ENCODE measurements at regions of chr9 and their contacts with region 1.

Region 1: DNA sequence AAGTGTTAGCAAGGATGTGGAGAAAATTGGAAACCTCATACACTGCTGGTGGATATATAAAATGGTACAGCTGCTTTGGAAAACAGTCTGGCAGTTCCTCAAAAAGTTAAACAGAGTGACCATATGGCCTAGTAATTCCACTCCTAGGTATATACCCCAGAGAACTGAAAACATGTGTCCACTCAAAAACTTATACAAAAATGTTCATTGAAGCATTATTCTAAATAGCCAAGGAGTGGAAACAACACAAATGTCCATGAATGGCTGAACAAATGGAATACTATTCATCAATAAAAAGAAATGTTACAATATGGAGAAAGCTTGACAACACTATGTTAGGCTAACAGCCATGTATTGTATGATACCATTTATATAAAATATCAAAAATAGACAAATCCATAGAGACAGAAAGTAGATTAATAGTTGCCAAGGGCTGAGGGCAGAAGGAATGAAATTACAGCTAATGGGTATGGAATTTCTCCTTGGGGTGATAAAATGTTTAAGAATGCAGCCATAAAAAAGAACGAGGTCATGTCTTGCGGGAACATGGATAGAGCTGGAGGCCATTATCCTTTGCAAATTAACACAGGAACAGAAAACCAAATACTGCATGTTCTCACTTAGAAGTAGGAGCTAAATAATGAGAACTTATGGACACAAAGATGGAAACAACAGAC is 33.6 kb upstream of the FBP1 start:
- DNase-seq: no peak
- H3K4me3 ChIP-seq: no peak overlapping the region
- H3K27ac ChIP-seq: peak overlapping the region; percentile 29 to 73; a peak in 3 of 4 replicates
- H3K4me1 ChIP-seq: 0 out of 4 replicates have a peak, but pooled peaks cover 0 to 12% of the 10 kb centered on the region in 2 experiments
- H3K27me3 ChIP-seq: no peaks in the 10 kb centered on the region
- CTCF ChIP-seq: no peak
- EP300 ChIP-seq: peak in 1 of 2 experiments; percentile 47; a peak in 1 of 4 replicates
- RAD21 ChIP-seq: no peak

Region 2: DNA sequence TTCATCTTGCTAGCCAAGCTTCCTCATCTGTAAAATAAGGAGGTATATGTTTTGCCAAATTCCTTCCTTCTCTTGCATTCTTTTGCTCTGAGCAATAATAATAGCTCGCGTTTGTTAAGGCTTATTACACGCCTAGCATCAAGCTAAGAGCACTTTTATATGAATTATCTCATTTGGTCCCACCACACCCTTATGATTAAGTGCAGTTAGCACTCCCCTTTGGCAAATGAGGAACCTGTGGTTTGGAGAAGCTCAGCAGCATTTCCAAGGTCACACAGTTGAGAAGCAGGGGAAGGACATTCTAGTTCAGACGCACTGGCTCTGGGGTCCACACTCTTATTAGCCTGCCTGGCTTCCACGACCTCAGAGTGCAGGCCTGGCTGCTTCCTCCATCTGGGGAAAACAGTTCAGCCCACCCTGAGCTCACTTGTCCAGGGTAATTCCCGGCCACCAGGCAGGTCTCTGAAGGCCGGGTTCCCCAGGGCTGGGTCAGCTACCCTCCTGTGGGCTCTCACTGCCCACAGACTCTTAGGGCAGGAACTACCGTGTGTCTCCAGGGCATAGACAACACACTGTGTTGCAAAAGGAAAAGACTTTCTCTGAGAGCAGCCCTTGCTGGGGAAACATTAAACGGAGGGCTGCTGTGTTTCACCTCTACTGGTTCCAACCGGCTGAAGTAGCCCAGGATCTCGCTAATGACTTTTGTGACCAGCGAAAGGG is 23.7 kb before region 1 on chr9:
- CTCF ChIA-PET with region 1: interaction called, 29 read pairs
- POLR2A ChIA-PET with region 1: no interaction called
- DNase-seq: no peak
- H3K4me3 ChIP-seq: no peak overlapping the region
- H3K27ac ChIP-seq: no peak overlapping the region
- H3K4me1 ChIP-seq: peaks cover 0 to 4% of the 10 kb centered on the region in 2 experiments; a peak in 1 of 4 replicates
- H3K27me3 ChIP-seq: no peaks in the 10 kb centered on the region
- CTCF ChIP-seq: no peak
- EP300 ChIP-seq: no peak
- RAD21 ChIP-seq: no peak

Region 3: GRCh38 chr9:94656200-94656599 is 16.7 kb before region 1 on chr9:
- CTCF ChIA-PET with region 1: interaction called, 29 read pairs
- POLR2A ChIA-PET with region 1: interaction called, 3 read pairs
- DNase-seq: no peak
- H3K4me3 ChIP-seq: no peak overlapping the region
- H3K27ac ChIP-seq: no peak overlapping the region
- H3K4me1 ChIP-seq: peaks cover 0 to 7% of the 10 kb centered on the region in 2 experiments; a peak in 1 of 4 replicates
- H3K27me3 ChIP-seq: no peaks in the 10 kb centered on the region
- CTCF ChIP-seq: no peak
- EP300 ChIP-seq: no peak
- RAD21 ChIP-seq: no peak

Region 4: GRCh38 chr9:94821098-94821887 is 148.3 kb after region 1 on chr9:
- CTCF ChIA-PET with region 1: no interaction called
- POLR2A ChIA-PET with region 1: no interaction called
- DNase-seq: no peak
- H3K4me3 ChIP-seq: no peak overlapping the region
- H3K27ac ChIP-seq: no peak overlapping the region
- H3K4me1 ChIP-seq: no peaks in the 10 kb centered on the region; a peak in 1 of 4 replicates
- H3K27me3 ChIP-seq: no peaks in the 10 kb centered on the region
- CTCF ChIP-seq: no peak
- EP300 ChIP-seq: no peak
- RAD21 ChIP-seq: no peak

Region 5: GRCh38 chr9:94867281-94867841 is 194.4 kb after region 1 on chr9:
- CTCF ChIA-PET with region 1: interaction called, 11 read pairs
- POLR2A ChIA-PET with region 1: no interaction called
- DNase-seq: peak; percentile 17
- H3K4me3 ChIP-seq: peak overlapping the region in 1 of 2 experiments; percentile 7; a peak in 1 of 4 replicates
- H3K27ac ChIP-seq: peak overlapping the region; percentile 97 to 100
- H3K4me1 ChIP-seq: peaks cover 63 to 75% of the 10 kb centered on the region in 2 experiments
- H3K27me3 ChIP-seq: no peaks in the 10 kb centered on the region
- CTCF ChIP-seq: no peak
- EP300 ChIP-seq: no peak
- RAD21 ChIP-seq: no peak; the same call in 1 of the 2 replicates

Region 6: GRCh38 chr9:95268681-95269080 is 595.7 kb after region 1 on chr9:
- CTCF ChIA-PET with region 1: interaction called, 11 read pairs
- POLR2A ChIA-PET with region 1: no interaction called
- DNase-seq: peak; percentile 77
- H3K4me3 ChIP-seq: no peak overlapping the region
- H3K27ac ChIP-seq: peak overlapping the region in 1 of 2 experiments; percentile 75; a peak in 2 of 4 replicates
- H3K4me1 ChIP-seq: peaks cover 0 to 34% of the 10 kb centered on the region in 2 experiments; a peak in 2 of 4 replicates
- H3K27me3 ChIP-seq: no peaks in the 10 kb centered on the region
- CTCF ChIP-seq: peak; percentile 58
- EP300 ChIP-seq: peak in 1 of 2 experiments; percentile 97; a peak in 2 of 4 replicates
- RAD21 ChIP-seq: peak; percentile 96